ENCODE measurements at regions of chr5 and their contacts with region 1.

Region 1: GRCh38 chr5:172106511-172107356 is 81.3 kb downstream of the STK10 start:
- DNase-seq: no peak
- H3K4me3 ChIP-seq: peak overlapping the region; percentile 38 to 47 (median 40)
- H3K27ac ChIP-seq: peak overlapping the region in 3 of 4 donors; percentile 38 to 70 (median 50)
- H3K4me1 ChIP-seq: peaks cover 57 to 75% (median 67%) of the 10 kb centered on the region in 4 donors
- H3K27me3 ChIP-seq: no peaks in the 10 kb centered on the region
- CTCF ChIP-seq: peak in 2 of 3 experiments; percentile 93 to 99
- EP300 ChIP-seq: no peak
- POLR2A ChIP-seq: no peak

Region 2: DNA sequence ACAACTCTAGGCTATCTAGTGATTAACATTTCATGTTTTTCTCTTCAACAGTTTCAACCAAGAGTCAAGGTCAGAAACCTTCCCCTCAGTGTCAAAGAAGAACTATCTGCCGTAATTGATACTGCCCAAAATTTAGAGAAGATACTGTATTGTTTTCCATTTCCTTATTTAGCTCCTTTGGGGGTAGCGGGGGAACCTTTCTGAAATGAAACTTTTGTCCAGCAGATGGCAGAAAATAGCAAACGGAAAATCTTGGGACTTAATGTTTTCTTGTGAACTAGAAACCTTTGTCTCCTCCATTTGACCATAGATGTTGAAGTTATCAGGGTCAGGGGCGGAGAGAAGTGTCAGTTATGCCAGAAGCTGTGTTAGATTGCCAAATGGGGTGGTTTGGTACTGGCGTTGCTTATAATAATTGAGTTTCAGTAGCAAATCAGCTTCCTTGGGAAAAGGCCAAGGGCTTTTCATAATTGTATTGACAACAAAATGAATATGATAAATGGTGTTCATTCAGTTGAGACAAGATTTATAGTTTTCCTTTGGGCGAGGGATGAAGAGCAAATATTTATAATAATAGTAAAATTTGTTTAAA is 899.4 kb before region 1 on chr5:
- intact Hi-C with region 1: no loop called
- DNase-seq: no peak
- H3K4me3 ChIP-seq: no peak overlapping the region
- H3K27ac ChIP-seq: no peak overlapping the region
- H3K4me1 ChIP-seq: peaks cover 0 to 4% (median 0%) of the 10 kb centered on the region in 4 donors
- H3K27me3 ChIP-seq: no peaks in the 10 kb centered on the region
- CTCF ChIP-seq: peak; percentile 42 to 60 (median 56)
- EP300 ChIP-seq: no peak
- POLR2A ChIP-seq: no peak

Region 3: GRCh38 chr5:171975262-171975876 is 131.4 kb before region 1 on chr5:
- intact Hi-C with region 1: no loop called
- DNase-seq: no peak
- H3K4me3 ChIP-seq: no peak overlapping the region
- H3K27ac ChIP-seq: peak overlapping the region in 1 of 4 donors; percentile 39
- H3K4me1 ChIP-seq: peaks cover 26 to 56% (median 54%) of the 10 kb centered on the region in 4 donors
- H3K27me3 ChIP-seq: no peaks in the 10 kb centered on the region
- CTCF ChIP-seq: no peak
- EP300 ChIP-seq: no peak
- POLR2A ChIP-seq: no peak

Region 4: DNA sequence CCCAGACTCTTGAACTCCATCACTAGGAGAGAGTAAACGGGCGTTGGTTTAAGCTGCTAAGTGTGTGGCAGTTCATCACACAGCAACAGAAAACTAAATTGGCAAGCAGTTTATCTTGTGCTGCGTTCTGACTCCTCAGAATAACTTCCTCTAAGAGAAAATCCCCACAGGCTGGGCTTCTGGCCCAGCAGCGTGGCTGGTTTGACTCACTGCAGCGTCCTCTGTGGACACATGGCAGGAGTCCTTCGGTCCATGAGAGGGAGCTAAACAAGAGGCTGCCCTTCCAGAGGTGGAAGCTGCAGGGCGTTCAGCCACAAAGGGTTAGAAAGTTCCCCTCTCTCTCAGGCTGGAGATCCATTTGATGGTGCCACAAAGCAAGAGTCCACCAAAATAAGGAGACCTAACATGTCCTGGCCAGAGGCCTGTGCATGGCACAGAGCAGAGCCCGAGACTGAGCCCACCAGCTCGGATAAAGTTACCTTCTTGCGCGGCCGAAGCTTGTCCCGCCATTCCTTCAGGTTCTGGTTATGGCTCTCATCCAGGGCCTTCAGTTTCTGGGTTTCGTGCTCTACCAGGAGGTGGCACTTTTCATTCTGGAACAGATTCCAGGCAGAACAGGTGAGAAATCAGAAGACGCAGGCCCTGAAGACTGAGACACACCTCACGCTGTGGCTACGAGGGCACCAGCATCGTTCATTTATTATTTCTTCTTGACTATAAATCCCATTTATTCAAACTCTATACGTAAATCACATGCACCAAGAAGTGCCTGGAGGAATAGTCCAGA is 54.1 kb before region 1 on chr5:
- intact Hi-C with region 1: no loop called
- DNase-seq: no peak
- H3K4me3 ChIP-seq: no peak overlapping the region
- H3K27ac ChIP-seq: peak overlapping the region in 2 of 4 donors; percentile 30 to 55
- H3K4me1 ChIP-seq: peaks cover 5 to 12% (median 10%) of the 10 kb centered on the region in 4 donors
- H3K27me3 ChIP-seq: no peaks in the 10 kb centered on the region
- CTCF ChIP-seq: peak in 1 of 3 experiments; percentile 22
- EP300 ChIP-seq: no peak
- POLR2A ChIP-seq: no peak

Region 5: DNA sequence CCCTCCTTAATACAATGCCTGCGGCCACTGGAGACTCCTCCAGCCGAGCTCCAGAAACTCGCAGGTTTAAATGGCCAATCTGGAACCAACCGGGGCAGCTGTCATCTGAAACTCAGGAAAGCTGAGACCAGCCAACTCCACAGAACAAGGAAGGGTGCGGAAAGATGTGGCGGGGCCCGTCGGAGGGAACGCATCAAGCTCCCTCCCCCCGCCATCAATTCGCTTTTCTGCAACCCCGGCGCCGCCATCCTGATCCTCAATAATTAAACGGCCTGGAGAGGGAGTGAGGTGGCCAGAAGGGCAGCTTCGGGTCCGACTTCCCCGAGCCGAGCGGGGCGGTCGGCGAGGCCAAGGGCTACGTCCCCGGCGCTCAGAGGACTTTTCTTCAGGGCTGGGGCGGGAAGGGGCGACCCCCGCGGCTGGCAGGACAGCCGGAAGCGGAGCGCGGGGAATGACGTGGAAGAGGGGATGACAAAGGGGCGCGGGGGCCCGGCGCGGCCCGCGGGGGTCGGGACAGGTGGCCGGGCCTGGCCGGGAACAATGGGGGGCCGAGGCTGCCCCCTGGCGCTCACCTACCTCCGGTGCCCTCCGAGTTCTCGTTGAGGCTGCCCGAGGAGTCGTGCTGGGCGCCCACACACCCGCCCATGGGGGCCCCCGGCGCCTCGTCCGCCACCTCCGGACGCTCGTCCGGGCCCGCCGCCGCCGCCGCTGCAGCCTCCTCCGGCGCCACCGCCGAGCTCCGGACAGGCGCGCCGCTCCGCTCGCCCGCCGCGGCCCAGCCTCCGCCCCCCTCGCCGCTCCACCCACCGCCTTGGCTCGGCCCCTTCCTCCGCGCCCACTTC is 176.5 kb after region 1 on chr5 and contains the start of gene UBTD2:
- intact Hi-C with region 1: loop called (anchors 5 kb)
- DNase-seq: peak; percentile 94
- H3K4me3 ChIP-seq: peak within 1 kb of the TSS; percentile 95 to 98 (median 96)
- H3K27ac ChIP-seq: peak within 1 kb of the TSS; percentile 93 to 97 (median 95)
- H3K4me1 ChIP-seq: peaks cover 20 to 46% (median 34%) of the 10 kb centered on the region in 4 donors
- H3K27me3 ChIP-seq: no peaks in the 10 kb centered on the region
- CTCF ChIP-seq: peak; percentile 51 to 54 (median 51)
- EP300 ChIP-seq: no peak
- POLR2A ChIP-seq: no peak
- total RNA-seq, gene UBTD2: 19.4 to 20.0 (median 19.9) TPM

Measured in esophagus muscularis mucosa (tissue), 4 donors.